ENCODE measurements at regions of chr2 and their contacts with region 1.

Region 1: GRCh38 chr2:58448065-58448507 is 207.0 kb upstream of the FANCL start:
- DNase-seq: peak in 1 of 2 experiments; percentile 64
- H3K4me3 ChIP-seq: no peak overlapping the region
- H3K27ac ChIP-seq: no peak overlapping the region
- H3K4me1 ChIP-seq: no peaks in the 10 kb centered on the region
- H3K27me3 ChIP-seq: no peaks in the 10 kb centered on the region
- CTCF ChIP-seq: peak; percentile 70

Region 2: DNA sequence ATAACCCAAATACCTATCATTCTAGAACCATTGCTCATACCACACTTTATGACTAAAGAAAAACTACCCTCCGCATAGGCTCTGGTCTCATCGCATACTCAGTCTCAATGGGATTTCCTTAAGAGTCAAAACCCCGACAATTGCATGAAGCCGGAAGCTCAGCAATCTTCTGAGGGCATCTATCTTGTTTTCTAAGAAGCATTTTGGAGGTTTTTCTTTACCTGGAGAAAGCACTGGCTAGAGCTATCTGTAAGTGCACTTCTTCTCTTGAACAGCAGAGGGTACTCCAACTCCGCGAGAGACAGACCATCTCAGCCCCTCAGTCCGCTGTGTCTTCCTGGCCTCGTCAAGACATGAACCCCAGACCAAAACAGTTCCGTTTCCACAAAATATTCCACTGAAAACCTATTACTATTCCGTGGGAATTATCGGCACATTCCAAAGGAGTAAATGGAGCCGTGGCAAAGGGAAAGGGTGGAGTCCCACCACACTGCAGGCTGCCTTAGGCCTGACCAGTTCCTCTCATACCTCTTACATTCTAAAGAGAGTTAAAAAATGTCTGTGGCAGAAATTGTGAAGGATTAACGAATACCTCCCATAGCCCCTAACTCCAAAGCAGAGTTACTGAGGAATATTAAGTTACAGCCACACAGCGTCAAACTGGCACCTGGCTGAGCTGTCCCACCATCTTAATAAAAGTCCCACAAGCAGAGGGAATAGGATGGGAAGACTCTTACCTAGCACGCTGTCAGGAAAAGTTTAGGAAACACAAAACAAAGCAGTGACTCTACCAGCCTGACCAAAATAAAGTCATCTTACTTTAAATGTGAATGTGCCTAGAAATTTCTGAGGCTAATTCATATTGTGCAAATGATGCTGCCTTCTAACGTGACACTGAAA is 727.1 kb before region 1 on chr2:
- CTCF ChIA-PET with region 1: interaction called, 5 read pairs
- POLR2A ChIA-PET with region 1: no interaction called
- intact Hi-C with region 1: loop called (anchors 1 kb)
- DNase-seq: peak; percentile 52 to 59
- H3K4me3 ChIP-seq: peak overlapping the region; percentile 22; the same call in 1 of the 2 replicates
- H3K27ac ChIP-seq: no peak overlapping the region
- H3K4me1 ChIP-seq: no peaks in the 10 kb centered on the region
- H3K27me3 ChIP-seq: no peaks in the 10 kb centered on the region
- CTCF ChIP-seq: peak; percentile 98

Region 3: DNA sequence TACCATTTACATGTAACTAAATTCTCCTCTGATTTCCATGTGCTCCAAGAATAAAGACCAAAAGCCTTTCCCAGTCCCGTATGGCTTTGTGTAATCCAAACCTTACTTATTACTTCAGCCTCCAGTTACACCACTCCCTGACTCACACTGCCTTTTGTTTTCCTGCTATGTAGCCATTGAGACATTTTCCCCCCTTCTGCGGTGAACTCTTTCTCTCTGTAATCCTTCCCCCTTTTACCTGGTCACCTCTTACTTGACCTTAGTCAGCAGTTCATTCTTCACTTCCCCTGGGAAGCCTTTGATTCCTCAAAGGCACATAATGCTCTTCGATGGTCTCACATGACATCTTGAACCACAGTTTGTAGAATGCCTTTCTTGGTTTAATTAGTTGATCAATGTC is 49.1 kb after region 1 on chr2:
- CTCF ChIA-PET with region 1: no interaction called
- POLR2A ChIA-PET with region 1: no interaction called
- intact Hi-C with region 1: no loop called
- DNase-seq: no peak
- H3K4me3 ChIP-seq: no peak overlapping the region
- H3K27ac ChIP-seq: no peak overlapping the region
- H3K4me1 ChIP-seq: peaks cover 12% of the 10 kb centered on the region; the same call in 1 of the 2 replicates
- H3K27me3 ChIP-seq: no peaks in the 10 kb centered on the region
- CTCF ChIP-seq: no peak

Region 4: GRCh38 chr2:58762176-58762781 is 314.2 kb after region 1 on chr2:
- CTCF ChIA-PET with region 1: no interaction called
- POLR2A ChIA-PET with region 1: no interaction called
- intact Hi-C with region 1: loop called (anchors 10 kb)
- DNase-seq: peak; percentile 67 to 75
- H3K4me3 ChIP-seq: no peak overlapping the region
- H3K27ac ChIP-seq: no peak overlapping the region
- H3K4me1 ChIP-seq: no peaks in the 10 kb centered on the region
- H3K27me3 ChIP-seq: no peaks in the 10 kb centered on the region
- CTCF ChIP-seq: peak; percentile 72

Measured in PC-9 (cell line).